Aorta (tissue), 5 donors: ENCODE measurements at regions of chr14 and their contacts with region 1.

Region 1: DNA sequence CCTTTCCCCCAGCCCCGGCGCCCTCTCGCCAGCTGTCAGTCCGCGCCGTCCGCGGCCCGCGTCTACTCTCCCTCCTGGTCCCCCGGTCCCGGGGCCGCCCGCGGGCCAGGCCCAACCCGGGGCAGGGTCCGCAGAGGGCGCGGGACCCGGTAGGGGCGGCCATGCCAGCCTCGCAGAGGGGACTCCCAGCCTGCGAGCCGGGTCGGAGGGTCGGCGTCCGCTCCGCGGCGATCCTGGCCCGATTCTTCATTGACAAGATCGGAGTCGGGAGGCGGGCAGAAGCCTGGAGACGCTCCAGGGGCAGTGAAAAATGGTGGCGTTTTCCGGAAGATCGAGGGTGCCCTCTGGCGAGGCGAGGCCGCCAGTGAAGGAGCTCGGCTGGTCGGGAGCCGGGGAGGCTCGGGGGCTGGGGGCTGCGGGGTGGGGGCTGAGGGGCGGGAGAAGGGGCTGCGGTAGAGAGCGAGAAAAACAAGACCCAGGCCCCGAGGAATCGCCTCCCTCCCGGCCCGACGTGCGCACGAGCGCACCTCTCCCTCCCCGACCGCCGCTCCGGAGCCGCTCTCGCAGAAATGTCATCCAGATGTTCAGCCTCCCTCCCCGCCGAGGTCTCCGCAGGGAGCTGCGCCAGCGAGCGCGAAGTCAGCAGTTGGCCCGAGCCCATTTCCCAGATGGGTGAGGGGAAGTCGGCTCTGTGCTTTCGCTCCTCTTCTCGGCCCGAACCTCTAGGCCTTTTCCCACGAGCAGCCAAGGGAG is 647 bp upstream of the TGFB3 start:
- DNase-seq: peak; percentile 89 to 95
- ATAC-seq: peak; percentile 85
- H3K4me3 ChIP-seq: peak overlapping the region; percentile 84 to 92
- H3K27ac ChIP-seq: peak overlapping the region; percentile 95 to 99
- H3K4me1 ChIP-seq: peaks cover 2 to 3% of the 10 kb centered on the region in 2 donors
- H3K27me3 ChIP-seq: no peaks in the 10 kb centered on the region

Region 2: GRCh38 chr14:75709207-75709812 is 273.1 kb before region 1 on chr14:
- intact Hi-C with region 1: loop called (anchors 1 to 2 kb)
- DNase-seq: peak; percentile 79 to 82
- ATAC-seq: peak; percentile 87
- H3K4me3 ChIP-seq: no peak overlapping the region
- H3K27ac ChIP-seq: no peak overlapping the region
- H3K4me1 ChIP-seq: peaks cover 0 to 5% of the 10 kb centered on the region in 2 donors
- H3K27me3 ChIP-seq: no peaks in the 10 kb centered on the region

Region 3: GRCh38 chr14:75794615-75795038 is 187.8 kb before region 1 on chr14:
- intact Hi-C with region 1: loop called (anchors 1 to 10 kb)
- DNase-seq: no peak
- ATAC-seq: peak; percentile 93
- H3K4me3 ChIP-seq: no peak overlapping the region
- H3K27ac ChIP-seq: no peak overlapping the region
- H3K4me1 ChIP-seq: no peaks in the 10 kb centered on the region
- H3K27me3 ChIP-seq: no peaks in the 10 kb centered on the region

Region 4: GRCh38 chr14:75906676-75907280 is 75.7 kb before region 1 on chr14:
- intact Hi-C with region 1: loop called (anchors 5 kb)
- DNase-seq: peak; percentile 71 to 84
- ATAC-seq: peak; percentile 81
- H3K4me3 ChIP-seq: no peak overlapping the region
- H3K27ac ChIP-seq: no peak overlapping the region
- H3K4me1 ChIP-seq: peaks cover 0 to 2% of the 10 kb centered on the region in 2 donors
- H3K27me3 ChIP-seq: no peaks in the 10 kb centered on the region

Region 5: GRCh38 chr14:75928690-75929181 is 53.7 kb before region 1 on chr14:
- intact Hi-C with region 1: no loop called
- DNase-seq: no peak
- ATAC-seq: no peak
- H3K4me3 ChIP-seq: no peak overlapping the region
- H3K27ac ChIP-seq: no peak overlapping the region
- H3K4me1 ChIP-seq: no peaks in the 10 kb centered on the region
- H3K27me3 ChIP-seq: no peaks in the 10 kb centered on the region

Region 6: DNA sequence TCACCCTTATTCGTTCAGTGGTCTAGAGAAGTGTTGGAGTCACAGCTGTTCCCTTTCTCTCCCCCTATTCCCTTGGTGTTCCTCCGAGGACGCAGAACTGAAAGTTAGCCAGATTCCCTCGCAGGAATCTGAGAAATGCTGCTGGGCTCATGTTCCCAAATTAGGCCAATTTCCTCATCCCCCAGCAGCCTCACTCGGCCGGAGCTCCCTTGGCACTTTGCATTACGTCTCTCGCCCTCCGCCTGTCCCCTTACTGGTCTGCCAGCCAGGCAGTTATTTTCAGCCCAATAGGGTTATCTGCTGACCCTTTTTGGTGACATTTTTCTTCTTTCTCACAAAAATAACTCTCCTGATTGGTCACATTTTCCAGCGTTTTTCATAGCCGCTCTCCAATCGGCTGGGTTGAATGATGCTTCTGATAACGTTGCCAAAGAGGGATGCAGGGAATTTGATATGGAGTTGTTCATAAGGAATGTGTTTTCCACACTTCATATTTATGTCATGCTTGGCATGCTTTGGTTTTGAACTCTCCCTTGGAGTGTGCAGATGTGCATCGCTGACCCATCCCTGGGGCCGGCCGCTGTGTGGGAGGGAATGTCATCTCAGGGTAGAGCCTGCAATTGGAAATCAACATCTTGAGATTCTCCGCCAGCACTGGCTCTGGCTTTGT is 13.1 kb after region 1 on chr14:
- intact Hi-C with region 1: loop called in 1 of 2 experiments (anchors 1 kb)
- DNase-seq: peak; percentile 88 to 91
- ATAC-seq: peak; percentile 91
- H3K4me3 ChIP-seq: peak overlapping the region in 1 of 2 donors; percentile 8
- H3K27ac ChIP-seq: peak overlapping the region; percentile 96 to 99
- H3K4me1 ChIP-seq: peaks cover 3 to 12% of the 10 kb centered on the region in 2 donors
- H3K27me3 ChIP-seq: no peaks in the 10 kb centered on the region

Region 7: GRCh38 chr14:76012354-76012753 is 29.9 kb after region 1 on chr14:
- intact Hi-C with region 1: loop called in 1 of 2 experiments (anchors 5 kb)
- DNase-seq: peak; percentile 80 to 88
- ATAC-seq: peak; percentile 89
- H3K4me3 ChIP-seq: no peak overlapping the region
- H3K27ac ChIP-seq: peak overlapping the region; percentile 96 to 100
- H3K4me1 ChIP-seq: peaks cover 0 to 2% of the 10 kb centered on the region in 2 donors
- H3K27me3 ChIP-seq: no peaks in the 10 kb centered on the region